Vagina (tissue), 2 donors: ENCODE measurements at regions of chr1 and their contacts with region 1.

Region 1: GRCh38 chr1:245014247-245015029 is 140.3 kb upstream of the KIF26B start:
- DNase-seq: no peak
- H3K4me3 ChIP-seq: no peak overlapping the region
- H3K27ac ChIP-seq: no peak overlapping the region
- H3K4me1 ChIP-seq: peaks cover 7% of the 10 kb centered on the region
- H3K27me3 ChIP-seq: no peaks in the 10 kb centered on the region
- CTCF ChIP-seq: no peak
- POLR2A ChIP-seq: no peak

Region 2: GRCh38 chr1:245031041-245031440 is 16.6 kb after region 1 on chr1:
- intact Hi-C with region 1: loop called (anchors 1 kb)
- DNase-seq: no peak
- H3K4me3 ChIP-seq: no peak overlapping the region
- H3K27ac ChIP-seq: no peak overlapping the region
- H3K4me1 ChIP-seq: no peaks in the 10 kb centered on the region
- H3K27me3 ChIP-seq: no peaks in the 10 kb centered on the region
- CTCF ChIP-seq: no peak
- POLR2A ChIP-seq: no peak

Region 3: GRCh38 chr1:245166471-245166885 is 152.0 kb after region 1 on chr1:
- intact Hi-C with region 1: no loop called
- DNase-seq: peak in 1 of 2 donors; percentile 69
- H3K4me3 ChIP-seq: peak overlapping the region; percentile 19 to 24
- H3K27ac ChIP-seq: no peak overlapping the region
- H3K4me1 ChIP-seq: peaks cover 4% of the 10 kb centered on the region
- H3K27me3 ChIP-seq: no peaks in the 10 kb centered on the region
- CTCF ChIP-seq: no peak
- POLR2A ChIP-seq: no peak